Activated T-helper 1 cell treated with anti-CD3 and anti-CD28 coated beads, Interleukin-12 subunit alpha, Interleukin-12 subunit beta, Interleukin-2, Interleukin-4 antibody, amounts not matched to agents 30 ng/mL and 10 ng/mL and 1 ng/mL, durations not matched to agents 14 hours and 24 hours and 36 hours (primary cell): ENCODE measurements at regions of chr19 and their contacts with region 1.

Region 1: GRCh38 chr19:41439441-41440222 is at the start of gene DMAC2:
- DNase-seq: peak; percentile 93
- H3K4me3 Mint-ChIP-seq: no peak within 1 kb of the TSS
- H3K27ac Mint-ChIP-seq: no peak within 1 kb of the TSS
- H3K4me1 Mint-ChIP-seq: peaks cover 5% of the 10 kb centered on the region
- H3K27me3 Mint-ChIP-seq: peaks cover 5% of the 10 kb centered on the region
- total RNA-seq, gene DMAC2: 56.7 and 57.3 TPM in 2 replicates

Region 2: DNA sequence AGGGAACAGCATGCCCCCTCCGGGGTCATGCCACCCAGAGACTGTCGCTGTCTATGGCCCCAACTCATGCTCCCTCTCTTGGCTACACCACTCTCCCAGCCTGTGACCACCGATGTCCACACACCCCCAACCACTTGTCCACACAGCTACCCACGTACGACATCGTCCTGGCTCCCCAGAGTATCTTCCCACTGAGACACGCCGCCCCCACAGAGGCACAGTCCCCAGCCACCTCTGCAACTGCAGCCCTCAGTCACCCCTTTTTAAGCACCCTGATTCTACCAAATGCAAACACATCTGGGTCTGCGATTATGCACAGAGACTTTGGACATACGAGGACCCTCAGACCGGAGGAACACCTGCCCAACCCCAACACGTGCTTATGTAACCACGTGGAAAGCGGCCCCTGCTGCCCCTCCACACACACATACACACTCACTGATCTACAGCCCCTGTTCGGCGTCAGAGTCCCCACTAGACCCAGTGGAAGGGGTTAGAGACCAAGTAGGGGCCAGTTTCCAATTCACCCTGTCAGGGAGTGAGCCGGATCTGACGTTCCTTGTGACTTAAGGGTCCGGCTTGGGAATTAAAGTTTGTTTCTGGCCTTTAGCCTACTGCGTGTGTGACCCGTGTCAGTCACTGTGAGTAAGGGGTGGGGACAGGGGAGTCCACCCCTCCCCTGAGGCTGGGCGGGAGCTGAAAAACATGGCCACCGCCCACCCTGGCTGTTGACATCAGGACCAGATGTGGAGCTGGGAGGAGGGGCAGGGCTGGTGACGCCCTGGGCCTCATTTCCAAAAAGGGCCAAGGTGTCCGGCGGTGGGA is 232.5 kb before region 1 on chr19:
- intact Hi-C with region 1: loop called (anchors 10 kb)
- DNase-seq: no peak
- H3K4me3 Mint-ChIP-seq: no peak overlapping the region
- H3K27ac Mint-ChIP-seq: no peak overlapping the region
- H3K4me1 Mint-ChIP-seq: peaks cover 18% of the 10 kb centered on the region
- H3K27me3 Mint-ChIP-seq: no peaks in the 10 kb centered on the region

Region 3: DNA sequence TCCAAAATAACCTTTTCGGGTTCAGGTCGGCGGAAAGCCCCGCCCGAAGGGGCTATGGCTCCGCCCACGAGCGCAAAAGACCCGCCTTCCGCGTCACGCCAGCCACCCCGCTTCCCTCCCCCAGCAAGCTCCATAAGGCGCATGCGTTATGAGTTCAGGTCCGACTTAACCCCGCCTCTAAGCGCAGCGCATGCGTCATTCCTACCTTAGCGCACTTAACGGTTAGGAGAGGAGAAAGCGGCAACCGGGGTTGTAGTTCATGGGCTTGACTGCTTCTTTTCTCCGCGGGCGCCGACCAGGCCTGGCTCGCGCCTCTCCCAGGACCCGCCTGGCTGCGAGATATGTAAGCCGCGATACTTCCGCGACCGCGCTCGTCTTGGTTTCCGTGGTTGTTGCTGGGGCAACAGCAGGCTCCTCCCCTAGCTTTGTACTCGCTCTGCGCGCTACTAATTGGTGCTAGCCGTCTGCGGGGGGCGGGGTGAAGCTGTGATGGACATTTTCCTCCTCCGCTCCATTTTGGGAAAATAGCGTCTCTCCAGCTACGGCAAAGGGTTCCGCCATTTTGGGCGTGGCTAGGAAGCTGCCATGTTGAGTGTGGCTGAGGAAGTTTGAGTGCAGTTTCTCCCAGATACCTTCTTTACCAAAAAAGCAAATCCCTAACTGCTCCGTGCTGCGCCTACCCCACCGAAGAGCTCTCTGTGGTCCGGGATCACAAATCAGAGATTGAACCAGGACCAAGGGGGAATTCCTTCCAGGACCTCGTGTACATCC is 75.7 kb before region 1 on chr19 and contains the start of gene B9D2:
- intact Hi-C with region 1: loop called (anchors 1 kb)
- DNase-seq: peak; percentile 97
- H3K4me3 Mint-ChIP-seq: peak within 1 kb of the TSS; percentile 88
- H3K27ac Mint-ChIP-seq: peak within 1 kb of the TSS; percentile 98
- H3K4me1 Mint-ChIP-seq: peaks cover 30% of the 10 kb centered on the region
- H3K27me3 Mint-ChIP-seq: no peaks in the 10 kb centered on the region
- total RNA-seq, gene B9D2: 4.4 and 4.5 TPM in 2 replicates

Region 4: GRCh38 chr19:41427647-41428480 is 11.8 kb before region 1 on chr19:
- intact Hi-C with region 1: loop called (anchors 1 kb)
- DNase-seq: peak; percentile 9
- H3K4me3 Mint-ChIP-seq: peak overlapping the region; percentile 82
- H3K27ac Mint-ChIP-seq: peak overlapping the region; percentile 87
- H3K4me1 Mint-ChIP-seq: peaks cover 11% of the 10 kb centered on the region
- H3K27me3 Mint-ChIP-seq: no peaks in the 10 kb centered on the region